Right ventricle myocardium superior (tissue), 1 donor: ENCODE measurements at regions of chr12 and their contacts with region 1.

Region 1: DNA sequence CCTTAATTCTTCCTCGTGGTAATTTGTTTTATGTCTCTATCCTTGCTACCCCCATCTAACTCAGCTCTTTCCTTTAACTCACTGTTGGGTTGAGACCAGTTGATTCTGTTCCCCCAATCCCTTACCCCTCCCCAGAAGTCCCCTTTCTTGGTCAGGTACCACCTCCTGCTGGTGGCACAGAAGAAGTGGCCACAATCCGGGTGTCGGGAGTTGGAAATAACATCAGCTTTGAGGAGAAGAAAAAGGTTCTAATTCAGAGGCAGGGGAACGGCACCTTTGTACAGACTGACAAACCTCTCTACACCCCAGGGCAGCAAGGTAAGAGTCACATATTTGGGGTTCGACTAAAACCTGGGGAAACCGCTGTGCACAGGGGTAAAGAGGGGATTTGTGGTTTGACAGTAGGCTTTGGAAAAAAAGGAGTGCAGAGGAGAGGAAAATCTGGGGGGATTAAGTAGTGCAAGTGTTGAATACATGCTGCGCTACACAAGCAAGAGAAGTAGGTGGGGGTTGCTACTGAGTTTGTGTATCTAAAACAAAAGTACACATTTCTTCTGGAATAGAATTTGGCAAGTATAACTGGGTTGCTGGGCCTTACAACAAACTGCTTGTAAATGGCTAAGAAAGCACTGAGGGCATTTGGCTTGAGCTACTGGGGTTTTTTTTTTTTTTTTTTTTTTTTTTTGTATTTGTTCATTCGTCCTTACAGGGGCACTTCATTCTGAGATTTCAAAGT is 1.3 kb downstream of the A2ML1 start:
- DNase-seq: no peak
- ATAC-seq: peak; percentile 36

Region 2: GRCh38 chr12:8687846-8688601 is 135.7 kb before region 1 on chr12:
- intact Hi-C with region 1: loop called (anchors 10 kb)
- DNase-seq: no peak
- ATAC-seq: peak; percentile 90